ENCODE measurements at regions of chr6 and their contacts with region 1.

Region 1: GRCh38 chr6:138817822-138818308 is 22.0 kb downstream of the ECT2L start:
- DNase-seq: no peak
- H3K4me3 ChIP-seq: no peak overlapping the region
- H3K27ac ChIP-seq: peak overlapping the region; percentile 16
- H3K4me1 ChIP-seq: peaks cover 12% of the 10 kb centered on the region
- H3K27me3 ChIP-seq: no peaks in the 10 kb centered on the region
- CTCF ChIP-seq: no peak

Region 2: GRCh38 chr6:138909511-138909910 is 91.6 kb after region 1 on chr6:
- intact Hi-C with region 1: no loop called
- DNase-seq: no peak
- H3K4me3 ChIP-seq: no peak overlapping the region
- H3K27ac ChIP-seq: peak overlapping the region; percentile 33
- H3K4me1 ChIP-seq: peaks cover 5% of the 10 kb centered on the region
- H3K27me3 ChIP-seq: no peaks in the 10 kb centered on the region
- CTCF ChIP-seq: no peak

Region 3: GRCh38 chr6:138987640-138988468 is 170.0 kb after region 1 on chr6 and contains the start of gene REPS1:
- intact Hi-C with region 1: loop called (anchors 5 kb)
- DNase-seq: peak; percentile 91
- H3K4me3 ChIP-seq: peak within 1 kb of the TSS; percentile 95
- H3K27ac ChIP-seq: peak within 1 kb of the TSS; percentile 93
- H3K4me1 ChIP-seq: peaks cover 59% of the 10 kb centered on the region
- H3K27me3 ChIP-seq: no peaks in the 10 kb centered on the region
- CTCF ChIP-seq: peak; percentile 100
- total RNA-seq, gene REPS1: 30.6 TPM

Region 4: DNA sequence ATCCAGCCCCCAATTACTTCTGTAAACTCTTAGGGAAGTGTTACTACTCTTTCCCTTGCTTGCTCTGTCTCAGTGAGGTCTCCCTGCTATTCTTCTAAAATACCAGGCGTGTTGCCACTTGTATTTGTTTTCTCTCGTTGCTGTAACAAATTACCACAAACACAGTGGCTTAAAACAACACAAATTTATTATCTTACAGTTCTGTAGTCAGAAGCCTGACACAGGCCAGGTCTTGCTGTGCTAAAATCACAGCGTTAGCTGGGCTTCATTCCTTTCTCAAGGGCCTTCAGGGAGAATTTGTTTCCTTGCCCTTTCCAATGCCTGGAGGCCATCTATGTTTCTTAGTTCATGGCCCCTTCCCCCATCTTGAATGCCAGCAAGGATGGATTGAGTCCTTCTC is 376.9 kb after region 1 on chr6:
- intact Hi-C with region 1: no loop called
- DNase-seq: no peak
- H3K4me3 ChIP-seq: no peak overlapping the region
- H3K27ac ChIP-seq: no peak overlapping the region
- H3K4me1 ChIP-seq: peaks cover 4% of the 10 kb centered on the region
- H3K27me3 ChIP-seq: no peaks in the 10 kb centered on the region
- CTCF ChIP-seq: no peak